Activated naive CD4-positive, alpha-beta T cell treated with anti-CD3 and anti-CD28 coated beads for 36 hours (primary cell): ENCODE measurements at regions of chr9 and their contacts with region 1.

Region 1: DNA sequence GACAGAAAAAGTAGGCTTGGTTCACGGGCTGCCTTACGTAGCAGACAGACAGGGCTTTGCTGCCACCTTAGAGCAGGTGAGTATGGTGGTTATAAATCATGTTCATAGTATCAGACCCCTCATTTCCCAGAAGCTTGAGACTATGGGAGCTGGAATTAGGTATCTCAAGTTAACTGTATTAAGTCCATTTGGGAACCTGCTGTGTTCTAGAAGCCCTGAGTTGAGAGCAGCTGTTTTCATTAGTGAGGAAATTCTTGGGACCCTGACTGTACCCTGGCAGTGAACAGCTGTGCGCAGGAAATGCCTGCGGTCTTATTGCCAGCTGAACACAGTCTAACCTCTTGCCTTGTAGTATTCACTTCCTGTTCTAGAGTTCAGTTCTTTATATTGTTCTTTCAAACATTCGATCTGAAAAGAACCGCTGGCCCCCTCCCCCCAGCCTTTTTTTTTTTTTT is 29.8 kb downstream of the UGCG start:
- DNase-seq: peak; percentile 70
- H3K4me3 Mint-ChIP-seq: no peak overlapping the region
- H3K27ac Mint-ChIP-seq: peak overlapping the region; percentile 46
- H3K4me1 Mint-ChIP-seq: peaks cover 25% of the 10 kb centered on the region
- H3K27me3 Mint-ChIP-seq: no peaks in the 10 kb centered on the region

Region 2: GRCh38 chr9:111910428-111910827 is 16.0 kb before region 1 on chr9:
- CTCF ChIA-PET with region 1: interaction called, 3 read pairs
- intact Hi-C with region 1: loop called (anchors 2 kb)
- DNase-seq: peak; percentile 42
- H3K4me3 Mint-ChIP-seq: no peak overlapping the region
- H3K27ac Mint-ChIP-seq: no peak overlapping the region
- H3K4me1 Mint-ChIP-seq: peaks cover 82% of the 10 kb centered on the region
- H3K27me3 Mint-ChIP-seq: no peaks in the 10 kb centered on the region

Region 3: GRCh38 chr9:112249277-112249676 is 322.8 kb after region 1 on chr9:
- CTCF ChIA-PET with region 1: no interaction called
- intact Hi-C with region 1: no loop called
- DNase-seq: no peak
- H3K4me3 Mint-ChIP-seq: no peak overlapping the region
- H3K27ac Mint-ChIP-seq: no peak overlapping the region
- H3K4me1 Mint-ChIP-seq: peaks cover 23% of the 10 kb centered on the region
- H3K27me3 Mint-ChIP-seq: no peaks in the 10 kb centered on the region